ENCODE measurements at regions of chr3 and their contacts with region 1.

Region 1: GRCh38 chr3:43769471-43770425 is 79.0 kb downstream of the ABHD5 start:
- DNase-seq: peak; percentile 90
- H3K4me3 ChIP-seq: peak overlapping the region in 1 of 3 experiments; percentile 27
- H3K27ac ChIP-seq: no peak overlapping the region
- H3K4me1 ChIP-seq: peaks cover 56% of the 10 kb centered on the region
- H3K27me3 ChIP-seq: no peaks in the 10 kb centered on the region
- CTCF ChIP-seq: peak; percentile 90 to 93

Region 2: DNA sequence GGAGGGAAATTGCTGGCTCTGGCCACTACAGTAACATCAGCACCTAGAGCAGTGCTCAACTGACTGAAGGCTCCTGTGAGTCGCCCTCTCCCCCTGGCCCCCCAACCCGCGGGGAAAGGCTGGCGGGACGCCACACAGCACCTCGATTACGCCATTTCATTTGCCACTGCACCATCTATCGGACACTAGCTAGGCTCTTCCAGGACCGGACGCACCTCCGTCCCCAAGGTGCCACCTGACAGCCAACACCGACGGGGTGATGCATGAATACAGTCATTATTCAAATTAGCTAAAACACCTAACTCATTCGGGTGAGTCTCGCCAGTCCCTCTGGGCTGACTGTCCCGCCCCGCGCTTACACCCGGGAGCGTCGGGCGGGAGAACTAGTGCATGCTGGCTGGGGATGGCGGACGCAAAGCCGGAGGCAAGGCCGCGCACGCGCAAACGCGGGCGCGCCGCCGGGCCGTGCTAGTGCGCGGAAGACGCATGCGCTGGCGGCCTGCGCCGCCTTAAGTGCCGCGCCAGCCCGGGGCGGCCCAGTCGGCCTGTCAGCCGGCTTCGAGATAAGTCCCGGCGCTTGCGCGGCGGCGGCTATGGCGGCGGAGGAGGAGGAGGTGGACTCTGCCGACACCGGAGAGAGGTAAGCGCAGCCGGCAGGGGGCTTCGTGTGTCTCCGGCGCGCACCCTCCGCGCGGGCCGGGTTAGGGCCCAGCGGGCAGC is 79.2 kb before region 1 on chr3 and contains the start of gene ABHD5:
- CTCF ChIA-PET with region 1: no interaction called
- dilution Hi-C with region 1: no loop called
- in situ Hi-C with region 1: no loop called
- intact Hi-C with region 1: loop called (anchors 1 kb)
- DNase-seq: peak; percentile 95
- H3K4me3 ChIP-seq: peak within 1 kb of the TSS; percentile 74 to 87 (median 85)
- H3K27ac ChIP-seq: peak within 1 kb of the TSS; percentile 55
- H3K4me1 ChIP-seq: peaks cover 42% of the 10 kb centered on the region
- H3K27me3 ChIP-seq: no peaks in the 10 kb centered on the region
- CTCF ChIP-seq: peak in 1 of 2 donors; percentile 29
- total RNA-seq, gene ABHD5: 37.9 to 59.8 TPM

Region 3: GRCh38 chr3:43723121-43723734 is 46.5 kb before region 1 on chr3:
- CTCF ChIA-PET with region 1: no interaction called
- dilution Hi-C with region 1: no loop called
- in situ Hi-C with region 1: no loop called
- intact Hi-C with region 1: no loop called
- DNase-seq: peak; percentile 26
- H3K4me3 ChIP-seq: no peak overlapping the region
- H3K27ac ChIP-seq: no peak overlapping the region
- H3K4me1 ChIP-seq: no peaks in the 10 kb centered on the region
- H3K27me3 ChIP-seq: no peaks in the 10 kb centered on the region
- CTCF ChIP-seq: no peak

Region 4: DNA sequence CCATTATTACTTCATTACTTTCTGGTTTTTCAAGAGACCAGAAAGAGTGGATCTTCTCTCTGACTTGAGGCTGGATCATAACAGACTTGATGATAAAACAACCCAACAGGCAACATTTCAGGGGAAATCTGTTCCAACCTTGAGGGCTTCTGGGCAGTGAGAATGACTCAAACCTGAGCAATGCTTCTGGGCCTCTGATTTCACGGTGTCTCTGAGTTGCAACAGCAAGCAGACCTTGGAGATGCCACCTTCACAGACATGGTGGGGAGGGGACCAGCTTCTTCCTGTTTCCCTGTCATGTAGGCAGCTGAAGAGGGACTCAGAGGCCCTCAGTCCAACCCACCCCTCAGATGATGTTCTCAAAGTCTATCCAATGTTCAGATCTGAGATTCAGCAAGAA is 25.0 kb after region 1 on chr3:
- CTCF ChIA-PET with region 1: no interaction called
- dilution Hi-C with region 1: no loop called
- in situ Hi-C with region 1: no loop called
- intact Hi-C with region 1: loop called (anchors 2 kb)
- DNase-seq: peak; percentile 75
- H3K4me3 ChIP-seq: no peak overlapping the region
- H3K27ac ChIP-seq: peak overlapping the region; percentile 24
- H3K4me1 ChIP-seq: peaks cover 30% of the 10 kb centered on the region
- H3K27me3 ChIP-seq: no peaks in the 10 kb centered on the region
- CTCF ChIP-seq: no peak

Region 5: GRCh38 chr3:43870120-43870519 is 100.4 kb after region 1 on chr3:
- CTCF ChIA-PET with region 1: no interaction called
- dilution Hi-C with region 1: no loop called
- in situ Hi-C with region 1: no loop called
- intact Hi-C with region 1: loop called (anchors 5 kb)
- DNase-seq: peak; percentile 50
- H3K4me3 ChIP-seq: no peak overlapping the region
- H3K27ac ChIP-seq: peak overlapping the region; percentile 66
- H3K4me1 ChIP-seq: peaks cover 95% of the 10 kb centered on the region
- H3K27me3 ChIP-seq: no peaks in the 10 kb centered on the region
- CTCF ChIP-seq: no peak

Region 6: GRCh38 chr3:44065311-44066094 is 295.8 kb after region 1 on chr3:
- CTCF ChIA-PET with region 1: no interaction called
- dilution Hi-C with region 1: no loop called
- in situ Hi-C with region 1: no loop called
- intact Hi-C with region 1: loop called (anchors 5 kb)
- DNase-seq: peak; percentile 83
- H3K4me3 ChIP-seq: no peak overlapping the region
- H3K27ac ChIP-seq: no peak overlapping the region
- H3K4me1 ChIP-seq: peaks cover 41% of the 10 kb centered on the region
- H3K27me3 ChIP-seq: no peaks in the 10 kb centered on the region
- CTCF ChIP-seq: peak in 1 of 2 donors; percentile 27

Region 7: GRCh38 chr3:44198284-44199269 is 428.8 kb after region 1 on chr3:
- CTCF ChIA-PET with region 1: interaction called, 4 read pairs
- dilution Hi-C with region 1: no loop called
- in situ Hi-C with region 1: loop called in 1 of 2 experiments (anchors 5 kb)
- intact Hi-C with region 1: loop called (anchors 1 kb)
- DNase-seq: peak; percentile 68
- H3K4me3 ChIP-seq: no peak overlapping the region
- H3K27ac ChIP-seq: no peak overlapping the region
- H3K4me1 ChIP-seq: peaks cover 5% of the 10 kb centered on the region
- H3K27me3 ChIP-seq: no peaks in the 10 kb centered on the region
- CTCF ChIP-seq: peak; percentile 78 to 90